Panc1 (cell line): ENCODE measurements at regions of chr1 and their contacts with region 1.

Region 1: DNA sequence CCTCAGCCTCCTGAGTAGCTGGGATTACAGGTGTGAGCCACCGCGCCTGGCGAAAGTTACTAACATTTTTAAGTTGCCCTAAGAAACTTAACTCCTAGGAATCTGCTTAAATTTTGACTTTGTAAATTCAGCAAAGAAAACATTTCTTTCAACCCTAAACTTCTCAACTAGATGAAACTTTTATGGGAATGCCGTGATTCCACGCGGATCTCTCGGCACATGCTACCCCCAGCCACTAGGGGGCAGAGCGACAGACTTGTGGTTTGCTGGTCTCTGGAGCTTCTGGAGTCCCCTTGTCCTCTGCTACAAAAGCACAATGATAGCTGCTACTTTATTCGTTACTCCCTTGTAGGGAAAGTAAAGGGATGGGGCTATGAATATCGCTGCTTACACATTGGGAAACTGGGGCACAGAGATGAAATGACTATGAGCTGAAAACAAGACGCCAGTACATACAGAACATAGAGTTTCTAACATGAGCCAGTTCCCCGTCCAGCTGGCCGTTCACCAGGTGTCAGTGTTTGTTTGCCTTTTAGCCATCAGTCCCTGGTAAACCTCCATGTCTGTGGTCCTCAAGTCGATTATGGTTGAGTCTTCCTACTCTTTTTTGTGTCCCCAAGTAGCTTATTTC is 114.7 kb downstream of the PBX1 start:
- DNase-seq: no peak
- ATAC-seq: no peak
- H3K4me3 ChIP-seq: no peak overlapping the region
- H3K27ac ChIP-seq: no peak overlapping the region
- H3K4me1 ChIP-seq: no peaks in the 10 kb centered on the region
- H3K27me3 ChIP-seq: no peaks in the 10 kb centered on the region
- CTCF ChIP-seq: peak; percentile 73

Region 2: DNA sequence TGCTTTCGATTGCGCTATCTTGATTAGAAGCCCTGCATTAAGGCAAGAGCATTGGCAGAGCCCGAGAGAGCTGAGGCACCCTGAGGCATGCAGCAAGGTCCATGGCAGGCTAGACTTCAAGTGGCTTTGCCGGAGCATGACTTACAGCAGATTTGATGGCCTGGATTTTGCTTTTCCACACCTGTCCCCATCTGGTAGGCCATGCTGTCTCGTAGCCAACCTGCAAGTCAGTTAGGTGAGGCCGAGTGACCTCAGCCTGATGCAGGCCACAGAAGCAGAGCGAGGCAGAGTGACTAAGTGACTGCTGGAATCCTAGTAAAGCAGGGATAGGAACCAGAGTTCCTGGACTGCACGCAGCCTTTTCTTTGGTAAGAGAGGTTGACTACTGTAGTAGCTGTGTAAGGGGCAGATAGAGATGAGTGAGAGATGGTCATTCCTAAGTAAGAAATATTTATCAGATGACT is 34.2 kb after region 1 on chr1:
- CTCF ChIA-PET with region 1: no interaction called
- POLR2A ChIA-PET with region 1: no interaction called
- in situ Hi-C with region 1: no loop called
- intact Hi-C with region 1: no loop called
- DNase-seq: no peak
- ATAC-seq: no peak
- H3K4me3 ChIP-seq: no peak overlapping the region
- H3K27ac ChIP-seq: no peak overlapping the region
- H3K4me1 ChIP-seq: no peaks in the 10 kb centered on the region
- H3K27me3 ChIP-seq: no peaks in the 10 kb centered on the region
- CTCF ChIP-seq: no peak

Region 3: GRCh38 chr1:165010418-165011070 is 336.8 kb after region 1 on chr1:
- CTCF ChIA-PET with region 1: interaction called, 10 read pairs
- POLR2A ChIA-PET with region 1: no interaction called
- in situ Hi-C with region 1: no loop called
- intact Hi-C with region 1: no loop called
- DNase-seq: no peak
- ATAC-seq: no peak
- H3K4me3 ChIP-seq: no peak overlapping the region
- H3K27ac ChIP-seq: no peak overlapping the region
- H3K4me1 ChIP-seq: no peaks in the 10 kb centered on the region
- H3K27me3 ChIP-seq: no peaks in the 10 kb centered on the region
- CTCF ChIP-seq: no peak